Activated T-helper 1 cell treated with anti-CD3 and anti-CD28 coated beads, Interleukin-12 subunit alpha, Interleukin-12 subunit beta, Interleukin-2, Interleukin-4 antibody, amounts not matched to agents 30 ng/mL and 10 ng/mL and 1 ng/mL, durations not matched to agents 14 hours and 24 hours and 36 hours (primary cell): ENCODE measurements at regions of chr10 and their contacts with region 1.

Region 1: GRCh38 chr10:68550747-68551411 is 9.3 kb upstream of the TET1 start:
- DNase-seq: peak; percentile 31
- H3K4me3 Mint-ChIP-seq: no peak overlapping the region
- H3K27ac Mint-ChIP-seq: no peak overlapping the region
- H3K4me1 Mint-ChIP-seq: no peaks in the 10 kb centered on the region
- H3K27me3 Mint-ChIP-seq: peaks cover 5% of the 10 kb centered on the region

Region 2: DNA sequence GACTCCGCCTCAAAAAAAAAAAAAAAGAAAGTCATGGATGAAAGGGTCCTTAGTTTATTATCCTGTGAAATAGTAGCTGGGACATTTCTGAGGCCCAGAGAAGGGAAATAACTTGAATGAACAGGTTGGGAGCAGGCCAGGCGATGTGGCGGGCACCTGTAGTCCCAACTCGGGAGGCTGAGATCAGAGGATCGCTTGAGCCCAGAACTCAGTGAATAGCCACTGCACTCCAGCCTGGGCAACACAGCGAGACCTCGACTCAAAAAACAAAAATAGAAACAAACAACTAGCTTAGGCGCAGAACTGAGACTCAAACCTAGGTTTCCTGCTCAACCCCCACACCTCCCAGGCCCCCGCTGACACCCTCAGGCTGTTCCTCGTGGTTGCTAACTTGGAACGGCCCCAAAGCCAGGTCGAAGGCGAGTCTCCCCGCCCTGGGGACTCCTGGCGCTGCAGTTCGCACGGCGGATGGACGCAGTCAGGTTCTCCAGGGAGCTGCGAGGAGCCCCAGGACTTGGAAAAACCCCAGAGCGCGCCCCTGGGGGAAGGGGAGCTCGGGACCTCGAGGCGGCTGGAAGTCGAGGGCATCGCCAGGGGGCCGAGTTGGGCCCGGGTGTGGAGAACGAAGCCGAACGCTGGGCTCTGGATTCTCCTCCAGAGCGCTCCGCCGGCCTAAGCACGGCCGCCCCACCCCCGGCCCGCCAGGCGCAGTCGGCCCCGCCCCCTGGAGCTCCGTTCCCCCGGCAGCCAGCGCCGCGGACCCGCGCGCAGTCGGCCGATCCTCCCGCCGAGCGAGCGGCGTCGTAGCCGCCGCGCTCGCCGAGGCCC is 276.1 kb after region 1 on chr10 and contains the start of gene STOX1:
- intact Hi-C with region 1: loop called (anchors 5 kb)
- DNase-seq: peak; percentile 40
- H3K4me3 Mint-ChIP-seq: peak within 1 kb of the TSS; percentile 80
- H3K27ac Mint-ChIP-seq: no peak within 1 kb of the TSS
- H3K4me1 Mint-ChIP-seq: no peaks in the 10 kb centered on the region
- H3K27me3 Mint-ChIP-seq: peaks cover 33% of the 10 kb centered on the region
- total RNA-seq, gene STOX1: 0.32 and 1.1 TPM in 2 replicates